GM10248 (cell line): ENCODE measurements at regions of chr20 and their contacts with region 1.

Region 1: DNA sequence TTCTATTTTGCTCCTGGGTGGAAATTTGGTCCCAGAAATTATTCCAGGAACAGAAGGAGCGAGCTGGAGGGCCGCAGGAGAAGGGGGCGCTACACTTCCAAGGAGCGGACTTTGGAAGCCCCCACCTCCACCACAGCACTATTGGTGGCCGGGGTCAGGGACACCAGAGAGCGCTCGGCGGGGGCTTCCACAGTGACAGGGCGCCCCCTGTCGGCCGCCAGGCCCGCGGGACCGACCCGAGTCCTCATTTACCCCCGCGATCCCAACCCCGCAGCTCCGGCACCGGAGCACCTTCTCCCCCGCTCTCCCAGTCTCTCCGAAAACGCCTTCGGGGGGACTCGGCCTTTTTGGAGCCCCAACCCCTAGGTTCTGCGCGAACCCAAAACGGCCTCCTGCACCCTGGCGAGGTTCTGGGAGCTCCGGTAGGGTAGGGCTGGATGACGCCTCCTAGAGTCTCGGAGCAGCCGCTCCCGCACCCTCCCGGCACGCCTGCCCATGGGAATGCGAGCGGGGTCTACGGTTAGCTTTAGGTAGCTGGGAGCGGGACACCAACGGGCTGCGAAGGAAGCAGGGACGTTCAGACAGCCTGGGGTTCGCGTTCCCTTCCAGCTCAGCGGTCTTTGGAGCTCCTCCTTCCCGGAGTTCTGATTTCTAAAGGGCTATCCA is 2.4 kb upstream of the FOXA2 start:
- DNase-seq: peak; percentile 63
- CTCF ChIP-seq: peak; percentile 35

Region 2: GRCh38 chr20:22339091-22339881 is 247.5 kb before region 1 on chr20:
- CTCF ChIA-PET with region 1: interaction called, 31 read pairs
- POLR2A ChIA-PET with region 1: no interaction called
- DNase-seq: peak; percentile 37
- CTCF ChIP-seq: peak; percentile 74

Region 3: DNA sequence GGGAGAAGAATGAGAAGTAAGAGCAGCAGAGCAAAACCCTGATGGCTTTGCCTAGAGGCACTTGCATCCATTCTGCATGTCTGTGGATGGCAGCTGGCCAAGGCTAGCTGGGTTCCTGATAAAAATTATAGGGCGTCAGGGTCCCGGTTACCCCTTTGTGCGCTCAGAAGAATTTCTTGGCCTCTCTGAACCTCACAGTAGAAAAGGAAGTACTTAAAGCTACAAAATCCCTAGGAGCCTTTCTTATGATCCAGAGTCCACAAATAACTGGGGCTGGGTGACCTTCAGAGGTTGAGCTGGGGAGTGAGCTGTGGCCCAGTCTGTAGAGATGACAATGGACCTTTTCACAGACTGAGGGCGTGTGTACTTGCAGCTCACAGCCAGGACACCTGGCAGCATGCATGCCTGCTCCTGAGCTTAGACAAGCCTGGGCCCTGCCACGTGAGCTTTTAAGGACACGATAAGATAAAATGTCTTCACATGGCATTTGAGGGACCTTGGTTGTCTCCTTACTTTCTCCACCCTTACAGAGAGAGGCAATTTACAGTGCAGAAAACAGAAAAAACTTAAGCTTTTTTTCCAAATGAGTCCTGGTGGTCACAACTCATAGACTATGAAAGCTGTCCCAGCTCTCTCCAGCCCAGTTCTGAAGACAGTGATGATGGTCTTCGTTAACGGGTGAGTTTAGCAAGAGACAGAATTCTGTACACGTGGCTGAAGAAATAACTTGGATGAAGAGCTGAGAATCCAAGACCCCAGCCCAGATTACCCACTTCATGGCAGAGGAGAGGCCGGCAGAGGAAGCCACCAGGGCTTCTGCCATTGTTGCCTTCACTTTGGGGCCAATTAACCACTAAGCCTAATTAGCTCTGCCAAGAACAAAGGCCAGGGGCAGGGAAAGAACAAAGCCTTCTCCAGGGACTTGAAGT is 52.7 kb before region 1 on chr20:
- CTCF ChIA-PET with region 1: no interaction called
- POLR2A ChIA-PET with region 1: no interaction called
- DNase-seq: no peak
- CTCF ChIP-seq: no peak

Region 4: DNA sequence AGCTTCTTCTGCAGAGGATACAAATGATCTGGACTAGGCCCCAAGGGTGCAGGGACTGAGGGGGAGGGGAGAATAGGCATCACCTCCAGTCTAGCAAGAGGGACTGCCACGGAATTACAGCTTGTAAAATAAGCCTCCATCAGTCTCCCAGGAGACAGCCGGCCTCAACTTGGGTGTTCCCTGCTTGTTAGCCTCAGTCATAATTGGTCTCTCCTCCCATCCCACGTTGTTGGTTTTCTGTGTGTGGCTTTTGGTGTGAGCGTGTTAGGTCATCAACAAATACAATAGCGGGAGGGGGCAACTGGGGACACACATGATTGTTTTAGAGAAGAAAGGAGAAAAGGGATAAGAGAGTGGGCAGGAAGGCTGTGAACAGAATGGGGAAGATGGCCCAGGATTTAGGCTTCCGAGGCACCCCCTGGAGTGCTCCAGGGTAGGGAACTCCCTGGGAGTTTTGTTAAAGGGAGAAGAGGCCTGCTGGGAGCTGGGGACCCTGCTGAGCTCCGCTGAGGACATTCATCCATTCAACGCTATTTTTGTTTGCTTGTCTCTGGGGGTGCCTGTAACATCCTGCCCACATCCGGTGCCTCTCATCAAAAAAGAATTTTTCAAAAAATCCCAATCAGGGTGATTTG is 11.6 kb before region 1 on chr20:
- CTCF ChIA-PET with region 1: interaction called, 11 read pairs
- POLR2A ChIA-PET with region 1: no interaction called
- DNase-seq: no peak
- CTCF ChIP-seq: no peak

Region 5: GRCh38 chr20:22597303-22597702 is 10.5 kb after region 1 on chr20:
- CTCF ChIA-PET with region 1: interaction called, 10 read pairs
- POLR2A ChIA-PET with region 1: no interaction called
- DNase-seq: no peak
- CTCF ChIP-seq: no peak

Region 6: DNA sequence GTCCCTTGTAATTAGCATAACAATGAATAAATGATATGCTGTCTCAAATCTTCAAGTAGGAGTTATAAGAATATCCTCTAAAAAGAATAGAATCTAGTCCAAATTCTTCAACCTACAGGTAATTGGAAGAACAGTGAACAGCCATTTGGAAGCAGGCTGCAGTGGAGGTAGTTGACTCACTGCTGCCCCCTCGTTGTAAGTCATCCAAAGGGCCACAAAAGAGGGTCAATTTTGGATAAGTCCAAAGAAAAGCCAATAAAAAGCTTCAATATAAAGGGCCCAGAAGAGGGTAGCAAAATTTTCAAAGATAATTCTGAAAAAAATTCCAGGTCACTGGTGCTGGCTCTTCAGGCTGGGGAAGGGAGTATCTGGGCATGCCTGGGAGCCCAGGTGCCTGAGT is 387.6 kb after region 1 on chr20:
- CTCF ChIA-PET with region 1: no interaction called
- POLR2A ChIA-PET with region 1: no interaction called
- DNase-seq: no peak
- CTCF ChIP-seq: no peak